GM13977 (cell line): ENCODE measurements at regions of chr19 and their contacts with region 1.

Region 1: DNA sequence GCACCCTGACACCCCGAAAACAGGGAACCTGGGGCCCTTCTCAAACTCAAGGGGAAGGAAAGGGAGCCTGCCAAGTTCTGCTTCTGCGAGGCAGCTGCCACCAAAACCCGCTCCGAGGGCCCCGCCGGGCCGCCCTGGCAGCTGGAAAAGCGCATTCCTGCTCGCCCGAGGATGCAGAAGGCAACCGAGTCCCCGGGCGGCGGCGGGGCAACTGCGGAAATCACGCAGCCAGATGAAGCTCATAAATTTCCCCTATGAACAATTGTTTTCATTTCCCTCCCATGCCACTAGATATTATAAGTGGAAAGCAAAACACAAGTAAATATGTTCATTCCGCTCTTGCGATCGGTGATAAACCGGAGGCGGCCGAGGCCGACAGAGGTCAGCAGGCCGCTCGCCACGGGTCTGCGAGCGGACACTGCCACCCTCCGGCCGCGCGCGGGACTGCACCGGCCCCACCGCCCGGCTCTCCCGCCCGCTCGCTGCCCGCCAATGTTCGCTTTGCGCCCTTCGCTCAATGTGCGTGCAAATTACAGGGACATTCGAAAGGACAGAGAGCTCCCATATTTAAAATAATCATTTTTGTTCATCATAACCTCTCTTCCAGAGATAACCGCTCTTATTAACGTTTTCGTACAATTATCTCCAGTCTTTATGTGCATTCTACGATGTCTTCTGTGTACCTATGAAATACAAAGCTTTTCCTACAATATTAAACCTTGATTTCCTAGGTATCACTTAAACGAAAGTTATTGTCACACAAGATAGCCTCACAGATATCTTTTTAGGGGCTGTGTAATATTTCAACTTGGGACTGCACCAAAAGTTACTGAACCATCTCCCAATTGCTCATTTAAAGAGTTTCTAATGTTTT is 120.8 kb upstream of the ZNF507 start:
- DNase-seq: peak; percentile 85
- CTCF ChIP-seq: peak; percentile 99

Region 2: DNA sequence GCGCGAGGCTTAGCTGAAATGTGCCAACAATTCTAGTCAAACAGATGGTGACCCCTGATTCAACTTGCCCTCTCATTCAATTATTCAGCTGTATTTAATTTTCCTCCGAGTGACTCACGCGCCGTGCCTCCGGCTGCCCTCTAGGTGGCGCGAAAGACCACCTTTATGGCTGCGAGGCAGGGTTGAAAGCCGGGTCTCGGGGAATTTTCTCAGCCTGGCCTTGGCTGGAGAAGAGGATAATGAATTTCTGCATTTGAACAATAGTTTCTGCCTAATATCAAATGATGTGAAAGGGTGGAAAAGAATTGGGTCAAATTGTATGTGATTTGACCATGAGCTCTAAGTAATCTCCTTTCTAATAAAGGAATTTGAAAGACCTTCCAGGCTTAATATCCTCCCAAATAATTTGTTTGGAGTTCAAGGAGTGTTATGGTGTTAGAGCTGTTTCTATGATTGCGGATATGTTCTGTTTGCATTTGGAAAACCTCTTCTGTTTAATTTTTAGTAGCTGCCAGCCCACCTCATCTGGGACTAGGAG is 1541.5 kb before region 1 on chr19:
- in situ Hi-C with region 1: loop called (anchors 25 kb)
- DNase-seq: peak; percentile 82
- CTCF ChIP-seq: peak; percentile 92

Region 3: GRCh38 chr19:32498648-32499200 is 274.1 kb after region 1 on chr19:
- in situ Hi-C with region 1: no loop called
- DNase-seq: no peak
- CTCF ChIP-seq: no peak